Sigmoid colon (tissue), 7 donors: ENCODE measurements at regions of chr10 and their contacts with region 1.

Region 1: DNA sequence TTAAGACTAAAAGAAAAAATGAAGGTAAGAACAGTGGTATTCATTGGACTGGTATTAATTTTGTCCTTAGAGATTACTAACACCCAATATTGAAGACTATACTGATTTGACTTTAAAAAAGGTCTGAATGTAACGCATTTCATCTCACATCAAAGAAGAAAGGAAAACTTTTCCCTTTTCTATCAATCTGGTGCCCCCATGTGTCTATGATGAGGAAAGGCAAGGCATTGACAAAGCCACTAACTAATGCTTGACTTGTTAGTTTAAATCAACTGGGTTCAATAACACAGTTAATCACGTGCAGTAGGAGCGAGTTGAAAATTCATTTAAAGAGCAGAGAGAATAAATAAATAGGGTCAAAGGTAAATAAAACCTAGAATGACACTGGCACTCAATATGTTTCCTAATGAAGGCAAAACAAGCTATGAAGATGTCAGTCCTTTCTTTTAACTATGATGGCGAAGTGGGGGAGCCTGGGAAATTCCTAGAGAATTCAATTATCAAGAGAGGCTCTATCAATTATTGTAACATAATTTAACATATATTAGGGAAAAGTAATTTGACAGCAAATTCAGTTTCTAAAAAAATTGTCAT is 180.9 kb downstream of the ANK3 start:
- DNase-seq: no peak
- H3K4me3 ChIP-seq: no peak overlapping the region
- H3K27ac ChIP-seq: no peak overlapping the region
- H3K4me1 ChIP-seq: peaks cover 0 to 5% (median 2%) of the 10 kb centered on the region in 4 donors
- H3K27me3 ChIP-seq: no peaks in the 10 kb centered on the region
- CTCF ChIP-seq: peak; percentile 64 to 81 (median 74)
- EP300 ChIP-seq: no peak
- POLR2A ChIP-seq: no peak

Region 2: DNA sequence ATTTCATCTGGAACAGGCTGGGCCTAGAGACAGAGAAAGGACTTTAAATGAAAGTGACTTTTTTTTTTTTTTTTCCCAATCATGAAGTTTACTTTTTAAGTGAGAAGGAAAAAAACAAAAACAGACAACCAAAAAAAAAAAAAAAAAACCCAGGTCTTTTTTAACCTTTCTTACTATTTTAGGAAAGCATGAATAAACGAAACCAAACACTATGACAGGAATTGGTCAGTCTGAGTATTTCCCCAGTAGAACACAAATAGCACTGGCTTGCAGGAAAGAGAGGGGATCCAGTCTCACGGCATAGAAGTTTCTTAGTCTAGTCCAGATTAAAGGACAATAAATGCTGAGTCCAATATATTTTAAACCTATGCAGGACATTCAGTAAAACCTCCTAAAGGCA is 121.9 kb before region 1 on chr10:
- intact Hi-C with region 1: no loop called
- DNase-seq: no peak
- H3K4me3 ChIP-seq: no peak overlapping the region
- H3K27ac ChIP-seq: no peak overlapping the region
- H3K4me1 ChIP-seq: no peaks in the 10 kb centered on the region
- H3K27me3 ChIP-seq: no peaks in the 10 kb centered on the region
- CTCF ChIP-seq: no peak
- EP300 ChIP-seq: no peak
- POLR2A ChIP-seq: no peak

Region 3: DNA sequence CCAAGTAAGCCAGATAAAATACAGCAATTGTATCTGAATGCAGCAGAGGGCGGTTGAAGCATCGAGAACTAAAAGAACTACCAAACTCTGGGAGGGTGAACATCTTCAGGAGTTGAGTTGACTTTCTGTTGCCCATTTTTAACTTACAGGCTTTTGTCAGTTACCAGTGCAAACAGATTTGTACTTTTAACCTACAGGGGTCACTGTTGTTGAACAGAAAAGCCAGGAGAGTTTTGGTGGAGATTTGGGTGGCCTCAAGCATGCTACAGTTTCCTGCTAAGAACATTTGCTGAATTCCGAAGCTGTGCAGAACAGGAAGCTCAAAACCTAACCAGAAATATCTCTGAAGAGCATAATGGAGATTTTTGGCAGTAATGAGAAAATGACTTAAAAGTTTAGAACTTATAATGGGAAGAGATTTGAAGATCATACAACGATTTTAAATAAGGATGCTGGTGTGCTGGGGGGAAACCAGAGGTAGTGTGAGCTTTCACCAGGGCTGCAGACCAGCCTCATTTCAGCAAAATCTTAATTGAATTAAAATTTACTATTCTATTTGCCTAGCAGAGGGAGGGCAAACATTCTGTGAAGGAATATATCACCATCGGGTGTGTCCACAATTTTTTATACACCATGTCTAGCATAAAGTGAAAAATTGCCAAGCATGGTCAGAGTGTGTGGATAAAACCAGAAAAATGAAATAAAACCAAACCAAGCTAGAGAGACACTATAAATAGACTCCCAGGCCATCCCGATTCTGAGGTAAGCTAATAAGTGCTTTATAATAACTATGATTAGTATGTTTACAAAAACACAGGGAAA is 93.8 kb before region 1 on chr10:
- intact Hi-C with region 1: loop called (anchors 1 kb)
- DNase-seq: no peak
- H3K4me3 ChIP-seq: no peak overlapping the region
- H3K27ac ChIP-seq: no peak overlapping the region
- H3K4me1 ChIP-seq: peaks cover 0 to 6% (median 0%) of the 10 kb centered on the region in 4 donors
- H3K27me3 ChIP-seq: no peaks in the 10 kb centered on the region
- CTCF ChIP-seq: peak in 3 of 4 experiments; percentile 56 to 58 (median 56)
- EP300 ChIP-seq: no peak
- POLR2A ChIP-seq: no peak